Activated CD4-positive, alpha-beta T cell treated with anti-CD3 and anti-CD28 coated beads for 36 hours (primary cell): ENCODE measurements at regions of chr10 and their contacts with region 1.

Region 1: GRCh38 chr10:102280397-102281101 is 35.2 kb downstream of the GBF1 start:
- DNase-seq: no peak
- ATAC-seq: no peak
- H3K4me3 Mint-ChIP-seq: peak overlapping the region; percentile 0
- H3K27ac Mint-ChIP-seq: peak overlapping the region; percentile 72
- H3K4me1 Mint-ChIP-seq: peaks cover 59% of the 10 kb centered on the region
- H3K27me3 Mint-ChIP-seq: no peaks in the 10 kb centered on the region

Region 2: GRCh38 chr10:102335184-102335583 is 54.6 kb after region 1 on chr10:
- CTCF ChIA-PET with region 1: interaction called, 4 read pairs
- POLR2A ChIA-PET with region 1: interaction called, 5 read pairs
- intact Hi-C with region 1: loop called (anchors 1 to 5 kb)
- DNase-seq: no peak
- ATAC-seq: no peak
- H3K4me3 Mint-ChIP-seq: no peak overlapping the region
- H3K27ac Mint-ChIP-seq: no peak overlapping the region
- H3K4me1 Mint-ChIP-seq: peaks cover 19% of the 10 kb centered on the region
- H3K27me3 Mint-ChIP-seq: no peaks in the 10 kb centered on the region

Region 3: GRCh38 chr10:102342958-102343357 is 62.4 kb after region 1 on chr10:
- CTCF ChIA-PET with region 1: interaction called, 4 read pairs
- POLR2A ChIA-PET with region 1: interaction called, 7 read pairs
- intact Hi-C with region 1: loop called (anchors 1 to 5 kb)
- DNase-seq: no peak
- ATAC-seq: no peak
- H3K4me3 Mint-ChIP-seq: no peak overlapping the region
- H3K27ac Mint-ChIP-seq: no peak overlapping the region
- H3K4me1 Mint-ChIP-seq: peaks cover 33% of the 10 kb centered on the region
- H3K27me3 Mint-ChIP-seq: no peaks in the 10 kb centered on the region